GM12878 (cell line): ENCODE measurements at regions of chr2 and their contacts with region 1.

Region 1: DNA sequence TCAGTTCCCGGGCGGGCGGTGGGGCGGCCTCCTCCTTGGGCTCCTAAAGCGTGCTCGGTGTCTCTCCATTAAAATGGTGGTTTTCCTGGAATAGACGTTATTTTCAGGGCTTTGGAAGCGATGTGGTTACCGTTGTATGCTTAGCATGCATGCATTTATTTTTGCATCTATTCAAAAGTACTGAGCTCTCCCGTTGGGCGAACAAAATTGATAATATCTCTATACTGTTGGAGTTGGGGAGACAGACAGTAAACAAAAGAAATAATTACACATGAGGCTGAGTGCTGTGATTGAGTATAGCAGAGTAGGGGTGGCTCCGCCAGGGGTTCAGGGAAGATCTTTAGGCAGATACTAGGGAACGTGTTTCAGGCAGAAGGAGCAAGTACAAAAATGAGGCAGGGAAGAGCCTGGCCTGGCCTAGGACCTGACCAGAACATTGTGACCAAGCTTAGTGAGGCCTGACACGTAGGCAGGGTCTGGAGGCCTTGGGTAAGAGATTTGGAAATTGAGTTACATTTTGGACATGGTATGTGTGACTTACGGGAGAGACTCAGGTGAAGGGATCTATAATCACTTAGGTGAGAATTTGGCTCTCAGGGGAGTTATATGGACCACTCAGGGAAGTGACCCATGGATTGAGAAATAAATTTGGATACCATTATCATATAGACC is 674 bp downstream of the NCAPH start:
- DNase-seq: no peak
- ATAC-seq: peak; percentile 3
- H3K4me3 ChIP-seq: peak overlapping the region; percentile 81
- H3K27ac ChIP-seq: peak overlapping the region; percentile 96
- H3K4me1 ChIP-seq: peaks cover 31% of the 10 kb centered on the region
- H3K27me3 ChIP-seq: no peaks in the 10 kb centered on the region
- CTCF ChIP-seq: no peak
- EP300 ChIP-seq: no peak
- POLR2A ChIP-seq: peak; percentile 77
- RAD21 ChIP-seq: no peak

Region 2: GRCh38 chr2:96145036-96145847 is 191.0 kb before region 1 on chr2 and contains the start of gene DUSP2:
- CTCF ChIA-PET with region 1: no interaction called
- POLR2A ChIA-PET with region 1: no interaction called
- RAD21 ChIA-PET with region 1: no interaction called
- SMC1A ChIA-PET with region 1: no interaction called
- in situ Hi-C with region 1: no loop called
- intact Hi-C with region 1: loop called (anchors 5 kb)
- DNase-seq: peak; percentile 85
- ATAC-seq: peak; percentile 62
- H3K4me3 ChIP-seq: peak within 1 kb of the TSS; percentile 92
- H3K27ac ChIP-seq: peak within 1 kb of the TSS; percentile 89
- H3K4me1 ChIP-seq: peaks cover 45% of the 10 kb centered on the region
- H3K27me3 ChIP-seq: no peaks in the 10 kb centered on the region
- CTCF ChIP-seq: no peak
- EP300 ChIP-seq: peak in 1 of 2 experiments; percentile 36; a peak in 3 of 4 replicates
- POLR2A ChIP-seq: no peak
- RAD21 ChIP-seq: 0 out of 2 replicates have a peak, but pooled peaks have one; percentile 22
- polyA plus RNA-seq, gene DUSP2: 9.7 to 34.6 TPM

Region 3: GRCh38 chr2:96305091-96305978 is 30.9 kb before region 1 on chr2 and contains the start of gene SNRNP200:
- CTCF ChIA-PET with region 1: interaction called, 4 read pairs
- POLR2A ChIA-PET with region 1: interaction called, 12 read pairs
- RAD21 ChIA-PET with region 1: interaction called, 5 read pairs
- SMC1A ChIA-PET with region 1: interaction called, 6 read pairs
- in situ Hi-C with region 1: no loop called
- intact Hi-C with region 1: loop called (anchors 2 kb)
- DNase-seq: no peak
- ATAC-seq: peak; percentile 98
- H3K4me3 ChIP-seq: peak within 1 kb of the TSS; percentile 90
- H3K27ac ChIP-seq: peak within 1 kb of the TSS; percentile 84
- H3K4me1 ChIP-seq: peaks cover 5% of the 10 kb centered on the region
- H3K27me3 ChIP-seq: no peaks in the 10 kb centered on the region
- CTCF ChIP-seq: no peak
- EP300 ChIP-seq: 0 out of 4 replicates have a peak, but pooled peaks of 1 of the 2 experiments have one; percentile 33
- POLR2A ChIP-seq: peak; percentile 94
- RAD21 ChIP-seq: no peak
- polyA plus RNA-seq, gene SNRNP200: 61.6 to 64.6 TPM

Region 4: DNA sequence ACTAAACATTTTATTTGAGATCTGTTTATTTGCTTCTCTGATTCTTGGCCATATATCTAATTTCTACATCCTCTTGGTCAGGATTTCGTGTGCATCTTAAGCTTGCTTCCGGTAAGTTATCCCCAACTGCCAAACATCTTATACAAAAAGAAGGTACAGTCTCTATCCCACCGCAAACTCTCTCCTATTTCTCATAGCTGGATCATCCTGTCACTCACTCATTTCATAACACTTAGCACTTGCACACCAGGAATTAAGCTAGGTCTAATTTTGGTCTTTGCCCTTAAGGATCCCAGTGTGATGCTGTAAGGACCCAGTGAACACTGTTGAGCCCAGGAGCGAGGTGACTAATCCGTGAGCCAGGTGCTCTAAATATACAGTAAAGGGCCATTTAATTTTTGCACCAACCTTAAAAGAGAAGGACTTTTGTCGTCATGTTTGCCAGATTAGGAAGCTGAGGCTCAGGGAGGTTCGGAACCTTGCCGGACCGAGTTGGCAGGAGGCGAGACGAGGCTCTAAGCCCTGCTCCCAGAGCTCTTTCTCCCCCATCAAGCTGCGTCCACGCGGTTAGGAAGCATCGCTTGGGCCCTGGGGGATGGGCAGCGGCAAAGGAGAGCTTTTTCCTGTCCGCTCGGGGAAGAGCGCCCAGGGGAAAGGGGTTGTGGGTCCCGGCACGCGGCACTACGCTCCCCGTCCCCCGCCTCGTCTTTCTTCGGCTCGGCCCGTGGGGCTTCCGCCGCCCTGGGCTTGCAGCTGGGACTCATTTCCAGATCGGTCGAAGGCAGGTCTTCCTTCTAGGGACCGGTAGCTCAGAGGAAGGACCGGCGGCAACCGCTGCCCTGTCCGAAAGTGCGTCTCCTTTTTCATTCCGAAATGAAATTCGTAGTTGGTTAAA is 15.3 kb before region 1 on chr2:
- CTCF ChIA-PET with region 1: interaction called, 7 read pairs
- POLR2A ChIA-PET with region 1: interaction called, 151 read pairs
- RAD21 ChIA-PET with region 1: interaction called, 44 read pairs
- SMC1A ChIA-PET with region 1: interaction called, 231 read pairs
- in situ Hi-C with region 1: no loop called
- intact Hi-C with region 1: no loop called
- DNase-seq: no peak
- ATAC-seq: peak; percentile 48
- H3K4me3 ChIP-seq: peak overlapping the region; percentile 90
- H3K27ac ChIP-seq: peak overlapping the region; percentile 88
- H3K4me1 ChIP-seq: peaks cover 30% of the 10 kb centered on the region
- H3K27me3 ChIP-seq: no peaks in the 10 kb centered on the region
- CTCF ChIP-seq: no peak
- EP300 ChIP-seq: no peak
- POLR2A ChIP-seq: no peak; the same call in 1 of the 2 replicates
- RAD21 ChIP-seq: no peak

Region 5: DNA sequence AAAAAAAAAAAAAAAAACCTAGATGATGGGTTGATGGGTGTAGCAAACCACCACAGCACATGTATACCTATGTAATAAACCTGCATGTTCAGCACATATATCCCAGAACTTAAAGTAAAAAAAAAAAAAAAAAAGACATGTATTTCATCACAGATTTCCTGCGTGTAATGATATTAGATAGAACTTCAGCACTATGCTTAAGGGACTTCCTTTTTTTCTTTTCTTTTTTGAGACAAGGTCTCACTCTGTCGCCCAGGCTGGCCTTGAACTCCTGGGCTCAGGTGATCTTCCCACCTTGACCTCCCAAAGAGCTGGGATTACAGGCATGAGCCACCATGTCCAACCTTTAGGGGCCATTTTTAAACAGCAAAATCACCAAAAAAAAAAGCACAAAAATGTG is 126.9 kb after region 1 on chr2:
- CTCF ChIA-PET with region 1: no interaction called
- POLR2A ChIA-PET with region 1: no interaction called
- RAD21 ChIA-PET with region 1: no interaction called
- SMC1A ChIA-PET with region 1: no interaction called
- in situ Hi-C with region 1: no loop called
- intact Hi-C with region 1: no loop called
- DNase-seq: no peak
- ATAC-seq: no peak
- H3K4me3 ChIP-seq: no peak overlapping the region
- H3K27ac ChIP-seq: no peak overlapping the region
- H3K4me1 ChIP-seq: no peaks in the 10 kb centered on the region
- H3K27me3 ChIP-seq: no peaks in the 10 kb centered on the region
- CTCF ChIP-seq: no peak
- EP300 ChIP-seq: no peak
- POLR2A ChIP-seq: no peak
- RAD21 ChIP-seq: no peak

Region 6: GRCh38 chr2:96485751-96486651 is 149.8 kb after region 1 on chr2:
- CTCF ChIA-PET with region 1: no interaction called
- POLR2A ChIA-PET with region 1: interaction called, 4 read pairs
- RAD21 ChIA-PET with region 1: no interaction called
- SMC1A ChIA-PET with region 1: no interaction called
- in situ Hi-C with region 1: no loop called
- intact Hi-C with region 1: loop called (anchors 5 kb)
- DNase-seq: peak; percentile 97
- ATAC-seq: peak; percentile 92
- H3K4me3 ChIP-seq: peak overlapping the region; percentile 84
- H3K27ac ChIP-seq: peak overlapping the region; percentile 95
- H3K4me1 ChIP-seq: peaks cover 23% of the 10 kb centered on the region
- H3K27me3 ChIP-seq: no peaks in the 10 kb centered on the region
- CTCF ChIP-seq: no peak
- EP300 ChIP-seq: peak; percentile 53 to 91; a peak in 2 of 4 replicates
- POLR2A ChIP-seq: peak; percentile 97
- RAD21 ChIP-seq: no peak

Region 7: DNA sequence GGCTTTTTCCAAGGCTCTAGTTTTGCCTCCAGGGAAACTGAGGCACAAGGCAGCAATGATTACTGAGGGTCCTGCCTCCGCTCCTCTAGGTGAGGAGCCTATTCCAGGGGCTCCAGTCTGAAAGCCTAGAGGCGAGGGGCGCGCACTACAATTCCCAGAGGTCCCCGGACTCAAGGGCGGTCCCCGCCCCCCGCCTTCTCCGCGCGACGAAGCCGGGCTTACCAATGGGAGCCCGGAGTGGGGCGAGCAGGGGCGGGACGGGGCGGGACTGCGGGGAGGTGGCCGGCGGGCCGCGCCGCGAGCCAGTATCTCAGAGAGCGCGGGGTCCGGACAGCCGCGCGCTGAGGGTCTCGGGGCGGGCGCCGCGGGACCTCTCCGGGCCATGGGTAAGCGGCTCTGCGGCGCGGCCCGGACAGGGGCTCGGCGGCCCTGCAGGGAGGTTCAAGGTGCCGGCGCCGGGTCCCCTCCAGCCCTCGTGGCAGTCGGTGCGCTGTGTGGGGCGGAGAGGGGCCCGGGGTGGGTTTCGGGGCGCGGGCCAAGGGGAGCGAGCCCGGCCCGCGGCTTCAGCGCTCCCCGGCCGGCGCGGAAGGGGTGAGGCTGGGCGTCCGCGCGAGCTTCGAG is 200.3 kb after region 1 on chr2 and contains the start of gene ARID5A:
- CTCF ChIA-PET with region 1: no interaction called
- POLR2A ChIA-PET with region 1: interaction called, 5 read pairs
- RAD21 ChIA-PET with region 1: no interaction called
- SMC1A ChIA-PET with region 1: no interaction called
- in situ Hi-C with region 1: no loop called
- intact Hi-C with region 1: loop called (anchors 5 kb)
- DNase-seq: peak; percentile 44
- ATAC-seq: peak; percentile 78
- H3K4me3 ChIP-seq: peak within 1 kb of the TSS; percentile 94
- H3K27ac ChIP-seq: peak within 1 kb of the TSS; percentile 92
- H3K4me1 ChIP-seq: peaks cover 43% of the 10 kb centered on the region
- H3K27me3 ChIP-seq: no peaks in the 10 kb centered on the region
- CTCF ChIP-seq: peak in 1 of 3 experiments; percentile 26; a peak in 1 of 6 replicates
- EP300 ChIP-seq: no peak
- POLR2A ChIP-seq: peak; percentile 90
- RAD21 ChIP-seq: no peak
- polyA plus RNA-seq, gene ARID5A: 0.76 to 3.8 TPM

Region 8: DNA sequence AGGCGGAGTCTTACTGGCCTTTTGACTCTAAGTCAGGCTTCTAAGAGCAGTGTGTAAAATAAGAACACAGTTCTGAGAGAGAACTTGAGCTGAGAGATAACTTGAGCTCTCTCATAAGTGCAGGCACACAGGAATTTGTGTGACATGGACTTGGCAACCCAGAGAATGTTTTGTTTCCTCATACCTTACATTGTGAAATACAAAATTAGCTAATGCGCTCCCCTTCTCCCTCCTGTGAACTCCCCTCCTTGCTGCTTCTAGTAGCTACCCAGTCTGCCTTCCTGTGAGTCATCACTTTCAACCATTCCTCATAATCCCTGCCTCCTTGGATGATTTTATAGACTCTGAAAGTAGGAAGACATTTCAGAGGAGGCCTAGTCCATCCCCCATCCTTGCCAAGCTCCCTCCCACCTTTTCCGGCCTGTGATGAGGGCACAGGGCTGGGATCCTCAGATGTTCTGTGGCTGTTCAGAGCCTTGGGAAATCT is 328.9 kb after region 1 on chr2:
- CTCF ChIA-PET with region 1: no interaction called
- POLR2A ChIA-PET with region 1: no interaction called
- RAD21 ChIA-PET with region 1: no interaction called
- SMC1A ChIA-PET with region 1: no interaction called
- in situ Hi-C with region 1: no loop called
- intact Hi-C with region 1: no loop called
- DNase-seq: no peak
- ATAC-seq: no peak
- H3K4me3 ChIP-seq: no peak overlapping the region
- H3K27ac ChIP-seq: no peak overlapping the region
- H3K4me1 ChIP-seq: no peaks in the 10 kb centered on the region
- H3K27me3 ChIP-seq: peaks cover 0 to 2% of the 10 kb centered on the region in 2 experiments; a peak in 1 of 4 replicates
- CTCF ChIP-seq: no peak
- EP300 ChIP-seq: no peak
- POLR2A ChIP-seq: no peak
- RAD21 ChIP-seq: no peak